WTC11 (cell line): ENCODE measurements at regions of chr6 and their contacts with region 1.

Region 1: GRCh38 chr6:53171605-53172446 is 23.2 kb upstream of the GCM1 start:
- DNase-seq: peak; percentile 87
- ATAC-seq: peak; percentile 93
- H3K4me3 Mint-ChIP-seq: no peak overlapping the region
- H3K27ac Mint-ChIP-seq: no peak overlapping the region
- H3K4me1 Mint-ChIP-seq: peaks cover 6% of the 10 kb centered on the region
- H3K27me3 Mint-ChIP-seq: no peaks in the 10 kb centered on the region
- CTCF ChIP-seq: peak; percentile 100

Region 2: GRCh38 chr6:53059648-53060589 is 111.9 kb before region 1 on chr6:
- CTCF ChIA-PET with region 1: no interaction called
- POLR2A ChIA-PET with region 1: no interaction called
- DNase-seq: no peak
- ATAC-seq: no peak
- H3K4me3 Mint-ChIP-seq: peak overlapping the region; percentile 90
- H3K27ac Mint-ChIP-seq: no peak overlapping the region
- H3K4me1 Mint-ChIP-seq: peaks cover 36% of the 10 kb centered on the region
- H3K27me3 Mint-ChIP-seq: no peaks in the 10 kb centered on the region
- CTCF ChIP-seq: no peak

Region 3: GRCh38 chr6:53294095-53294494 is 122.3 kb after region 1 on chr6:
- CTCF ChIA-PET with region 1: interaction called, 10 read pairs
- POLR2A ChIA-PET with region 1: no interaction called
- DNase-seq: peak; percentile 65
- ATAC-seq: peak; percentile 92
- H3K4me3 Mint-ChIP-seq: no peak overlapping the region
- H3K27ac Mint-ChIP-seq: no peak overlapping the region
- H3K4me1 Mint-ChIP-seq: peaks cover 6% of the 10 kb centered on the region
- H3K27me3 Mint-ChIP-seq: no peaks in the 10 kb centered on the region
- CTCF ChIP-seq: peak; percentile 64

Region 4: DNA sequence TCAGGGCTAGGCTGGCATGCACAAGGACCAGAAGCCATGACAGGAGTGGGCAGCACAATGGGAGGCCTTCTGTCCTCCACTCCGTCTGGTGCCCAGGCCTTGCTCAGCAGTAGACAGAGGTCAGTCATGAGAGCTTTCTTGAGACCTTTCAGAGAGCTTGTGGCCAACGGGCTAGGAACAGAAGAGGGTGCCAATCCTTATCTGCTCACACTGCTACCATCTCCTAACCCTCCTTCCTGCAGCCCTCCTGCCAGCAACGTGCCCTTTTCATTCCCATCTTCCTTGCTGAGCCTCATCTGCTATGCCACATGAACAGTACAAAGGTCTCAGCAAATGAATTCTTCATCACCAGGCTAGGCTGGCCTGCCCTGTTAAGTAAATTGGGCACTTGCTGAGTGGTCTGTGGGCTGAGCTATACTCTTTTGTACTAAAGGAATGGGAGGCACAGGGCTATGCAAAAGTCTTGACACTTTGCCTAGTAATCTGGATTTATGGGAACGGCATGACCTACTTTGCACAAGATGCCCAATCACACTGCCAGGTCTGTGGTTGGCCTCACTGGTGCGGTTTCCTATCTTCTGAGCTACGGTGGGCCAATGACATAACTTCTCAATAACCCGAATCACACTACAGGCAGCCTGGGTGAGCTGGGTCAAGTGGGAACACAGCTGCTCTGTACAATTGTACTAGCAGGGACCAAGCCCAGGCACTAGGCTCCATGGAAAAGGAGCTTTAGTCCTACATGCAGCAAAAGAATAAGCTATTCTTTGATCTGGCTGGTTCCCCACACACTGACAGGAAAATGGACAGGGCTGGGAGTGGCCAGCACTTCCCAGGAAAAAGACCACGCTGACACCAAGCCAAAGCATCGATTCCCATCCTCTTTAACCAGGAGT is 129.1 kb after region 1 on chr6:
- CTCF ChIA-PET with region 1: interaction called, 10 read pairs
- POLR2A ChIA-PET with region 1: no interaction called
- DNase-seq: no peak
- ATAC-seq: no peak
- H3K4me3 Mint-ChIP-seq: no peak overlapping the region
- H3K27ac Mint-ChIP-seq: peak overlapping the region; percentile 34; the same call in 1 of the 2 replicates
- H3K4me1 Mint-ChIP-seq: peaks cover 52% of the 10 kb centered on the region
- H3K27me3 Mint-ChIP-seq: no peaks in the 10 kb centered on the region
- CTCF ChIP-seq: no peak

Region 5: GRCh38 chr6:53484476-53485280 is 312.9 kb after region 1 on chr6:
- CTCF ChIA-PET with region 1: interaction called, 50 read pairs
- POLR2A ChIA-PET with region 1: no interaction called
- DNase-seq: peak; percentile 62
- ATAC-seq: peak; percentile 56; the same call in 1 of the 2 replicates
- H3K4me3 Mint-ChIP-seq: no peak overlapping the region
- H3K27ac Mint-ChIP-seq: no peak overlapping the region
- H3K4me1 Mint-ChIP-seq: no peaks in the 10 kb centered on the region
- H3K27me3 Mint-ChIP-seq: no peaks in the 10 kb centered on the region
- CTCF ChIP-seq: peak; percentile 75